ENCODE measurements at regions of chr6 and their contacts with region 1.

Region 1: GRCh38 chr6:138486249-138487101 is 12.8 kb downstream of the NHSL1 start:
- DNase-seq: no peak
- H3K4me3 ChIP-seq: no peak overlapping the region
- H3K4me3 Mint-ChIP-seq: no peak overlapping the region
- H3K27ac ChIP-seq: no peak overlapping the region
- H3K27ac Mint-ChIP-seq: no peak overlapping the region
- H3K4me1 ChIP-seq: no peaks in the 10 kb centered on the region
- H3K4me1 Mint-ChIP-seq: no peaks in the 10 kb centered on the region
- H3K27me3 ChIP-seq: no peaks in the 10 kb centered on the region
- H3K27me3 Mint-ChIP-seq: peaks cover 1 to 31% of the 10 kb centered on the region in 2 donors

Region 2: GRCh38 chr6:138517635-138518034 is 31.2 kb after region 1 on chr6:
- CTCF ChIA-PET with region 1: no interaction called
- POLR2A ChIA-PET with region 1: interaction called, 13 read pairs
- DNase-seq: peak; percentile 27 to 69 (median 44)
- H3K4me3 ChIP-seq: no peak overlapping the region
- H3K4me3 Mint-ChIP-seq: no peak overlapping the region
- H3K27ac ChIP-seq: no peak overlapping the region
- H3K27ac Mint-ChIP-seq: peak overlapping the region in 1 of 8 donors; percentile 19
- H3K4me1 ChIP-seq: no peaks in the 10 kb centered on the region
- H3K4me1 Mint-ChIP-seq: peaks cover 13 to 16% (median 16%) of the 10 kb centered on the region in 3 donors
- H3K27me3 ChIP-seq: no peaks in the 10 kb centered on the region
- H3K27me3 Mint-ChIP-seq: peaks cover 4 to 25% of the 10 kb centered on the region in 2 donors

Region 3: GRCh38 chr6:138538390-138539031 is 52.0 kb after region 1 on chr6:
- CTCF ChIA-PET with region 1: no interaction called
- POLR2A ChIA-PET with region 1: no interaction called
- DNase-seq: no peak
- H3K4me3 ChIP-seq: no peak overlapping the region
- H3K4me3 Mint-ChIP-seq: peak overlapping the region in 1 of 7 donors; percentile 24
- H3K27ac ChIP-seq: no peak overlapping the region
- H3K27ac Mint-ChIP-seq: no peak overlapping the region
- H3K4me1 ChIP-seq: no peaks in the 10 kb centered on the region
- H3K4me1 Mint-ChIP-seq: no peaks in the 10 kb centered on the region
- H3K27me3 ChIP-seq: no peaks in the 10 kb centered on the region
- H3K27me3 Mint-ChIP-seq: peaks cover 0 to 41% of the 10 kb centered on the region in 2 donors